Caco-2 (cell line): ENCODE measurements at regions of chr4 and their contacts with region 1.

Region 1: GRCh38 chr4:88369936-88370335 is 8.7 kb upstream of the HERC6 start:
- DNase-seq: no peak
- H3K4me3 ChIP-seq: no peak overlapping the region; the same call in 1 of the 2 replicates
- H3K4me3 Mint-ChIP-seq: peak overlapping the region; percentile 60
- H3K27ac Mint-ChIP-seq: no peak overlapping the region
- H3K4me1 ChIP-seq: no peaks in the 10 kb centered on the region
- H3K4me1 Mint-ChIP-seq: no peaks in the 10 kb centered on the region
- H3K27me3 ChIP-seq: no peaks in the 10 kb centered on the region
- H3K27me3 Mint-ChIP-seq: peaks cover 2% of the 10 kb centered on the region
- CTCF ChIP-seq: no peak

Region 2: DNA sequence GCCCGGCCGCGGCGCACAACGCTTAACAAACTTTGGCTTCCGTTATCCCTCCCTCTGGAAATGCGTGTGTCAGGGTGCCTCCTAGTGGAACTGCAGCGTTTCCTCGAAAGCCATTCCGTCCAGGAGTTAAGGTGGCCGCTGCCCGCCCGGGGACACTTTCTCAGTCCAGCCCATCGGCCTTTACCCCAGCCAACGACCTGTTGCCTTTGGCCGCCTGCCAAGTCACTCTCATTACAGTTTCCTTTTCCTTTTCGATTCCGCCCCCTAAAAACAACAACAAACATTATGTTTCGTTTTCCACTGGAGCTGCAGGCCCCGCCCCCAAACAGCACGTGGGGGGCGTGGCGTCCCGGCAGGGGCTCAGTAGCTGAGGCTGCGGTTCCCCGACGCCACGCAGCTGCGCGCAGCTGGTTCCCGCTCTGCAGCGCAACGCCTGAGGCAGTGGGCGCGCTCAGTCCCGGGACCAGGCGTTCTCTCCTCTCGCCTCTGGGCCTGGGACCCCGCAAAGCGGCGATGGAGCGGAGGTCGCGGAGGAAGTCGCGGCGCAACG is 86.9 kb after region 1 on chr4 and contains the start of gene HERC5:
- CTCF ChIA-PET with region 1: no interaction called
- POLR2A ChIA-PET with region 1: no interaction called
- intact Hi-C with region 1: loop called (anchors 2 kb)
- DNase-seq: peak; percentile 88 to 90
- H3K4me3 ChIP-seq: peak within 1 kb of the TSS; percentile 50
- H3K4me3 Mint-ChIP-seq: peak within 1 kb of the TSS; percentile 87
- H3K27ac Mint-ChIP-seq: peak within 1 kb of the TSS; percentile 81
- H3K4me1 ChIP-seq: no peaks in the 10 kb centered on the region
- H3K4me1 Mint-ChIP-seq: no peaks in the 10 kb centered on the region
- H3K27me3 ChIP-seq: no peaks in the 10 kb centered on the region
- H3K27me3 Mint-ChIP-seq: peaks cover 3% of the 10 kb centered on the region
- CTCF ChIP-seq: peak; percentile 54 to 80
- total RNA-seq, gene HERC5: 5.6 and 6.8 TPM in 2 replicates

Region 3: GRCh38 chr4:89847571-89848325 is 1477.8 kb after region 1 on chr4:
- CTCF ChIA-PET with region 1: no interaction called
- POLR2A ChIA-PET with region 1: no interaction called
- intact Hi-C with region 1: no loop called
- DNase-seq: no peak
- H3K4me3 ChIP-seq: no peak overlapping the region
- H3K4me3 Mint-ChIP-seq: no peak overlapping the region
- H3K27ac Mint-ChIP-seq: no peak overlapping the region
- H3K4me1 ChIP-seq: no peaks in the 10 kb centered on the region
- H3K4me1 Mint-ChIP-seq: no peaks in the 10 kb centered on the region
- H3K27me3 ChIP-seq: no peaks in the 10 kb centered on the region
- H3K27me3 Mint-ChIP-seq: no peaks in the 10 kb centered on the region
- CTCF ChIP-seq: no peak